Heart left ventricle (tissue), 16 donors: ENCODE measurements at regions of chr2 and their contacts with region 1.

Region 1: GRCh38 chr2:231124838-231125568 is at the start of gene HTR2B:
- DNase-seq: no peak
- ATAC-seq: peak in 3 of 4 donors; percentile 46 to 78 (median 49)
- H3K4me3 ChIP-seq: peak within 1 kb of the TSS in 8 of 12 donors; percentile 3 to 57 (median 28)
- H3K27ac ChIP-seq: peak within 1 kb of the TSS in 6 of 12 donors; percentile 2 to 53 (median 29)
- H3K4me1 ChIP-seq: peaks cover 2 to 32% (median 19%) of the 10 kb centered on the region in 12 donors
- H3K27me3 ChIP-seq: no peaks in the 10 kb centered on the region
- CTCF ChIP-seq: no peak
- POLR2A ChIP-seq: no peak
- total RNA-seq, gene HTR2B: 0.31 to 2.2 (median 0.72) TPM

Region 2: GRCh38 chr2:231181860-231182512 is 57.0 kb after region 1 on chr2:
- intact Hi-C with region 1: loop called in 1 of 10 experiments (anchors 2 kb)
- DNase-seq: peak; percentile 73 to 87 (median 86)
- ATAC-seq: peak; percentile 78 to 89 (median 86)
- H3K4me3 ChIP-seq: no peak overlapping the region
- H3K27ac ChIP-seq: peak overlapping the region; percentile 9 to 77 (median 54)
- H3K4me1 ChIP-seq: peaks cover 5 to 63% (median 36%) of the 10 kb centered on the region in 12 donors
- H3K27me3 ChIP-seq: no peaks in the 10 kb centered on the region
- CTCF ChIP-seq: peak in 1 of 12 donors; percentile 7
- POLR2A ChIP-seq: no peak

Region 3: DNA sequence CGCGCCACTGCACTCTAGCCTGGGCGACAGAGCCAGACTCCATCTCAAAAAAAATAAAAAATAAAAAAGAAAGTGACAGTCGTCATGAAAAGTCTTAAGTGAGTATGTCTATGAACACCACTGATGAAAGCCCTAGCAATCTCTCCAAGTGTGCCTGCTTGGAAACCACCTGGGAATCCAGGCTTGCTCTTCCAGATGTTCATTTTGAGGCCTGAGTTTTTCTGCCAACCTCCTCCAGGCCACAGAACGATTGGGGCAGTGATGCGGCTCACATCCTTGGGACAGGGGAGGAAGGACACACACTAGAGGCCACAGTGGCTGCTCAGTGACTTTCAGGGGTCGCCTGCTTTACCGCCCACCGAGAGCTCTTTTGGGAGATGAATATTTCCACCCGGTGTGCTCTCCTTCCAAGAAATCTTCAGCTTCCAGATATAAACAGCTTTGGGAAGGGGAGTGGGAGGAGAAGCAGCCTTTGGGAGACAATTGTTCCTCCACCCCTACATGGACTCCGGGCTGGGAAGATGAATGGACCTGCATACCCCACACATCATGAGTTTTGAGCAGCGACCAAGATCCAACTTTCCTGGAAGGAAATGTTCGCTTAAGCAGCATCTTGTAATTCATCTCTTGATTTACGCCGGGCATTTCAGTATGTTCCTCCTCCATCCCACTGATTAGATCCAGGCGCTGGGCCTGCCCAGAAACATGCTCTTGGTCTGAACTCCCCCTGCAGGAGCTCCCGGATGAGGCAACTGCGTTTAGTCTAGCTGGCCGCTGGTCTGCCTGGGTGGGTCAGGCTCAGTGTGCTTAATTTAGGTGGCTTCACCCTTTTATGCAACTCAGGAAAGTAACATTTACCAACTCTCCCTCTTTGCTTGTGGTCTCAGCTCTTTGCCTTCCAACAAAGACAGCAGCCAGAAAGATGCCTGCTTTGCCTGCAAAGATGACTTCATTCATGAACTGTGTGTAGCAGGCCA is 67.2 kb after region 1 on chr2:
- intact Hi-C with region 1: loop called in 1 of 10 experiments (anchors 5 kb)
- DNase-seq: peak; percentile 69 to 85 (median 79)
- ATAC-seq: peak; percentile 58 to 76 (median 67)
- H3K4me3 ChIP-seq: no peak overlapping the region
- H3K27ac ChIP-seq: peak overlapping the region in 11 of 12 donors; percentile 15 to 95 (median 85)
- H3K4me1 ChIP-seq: peaks cover 0 to 40% (median 20%) of the 10 kb centered on the region in 12 donors
- H3K27me3 ChIP-seq: peaks cover 0 to 6% (median 0%) of the 10 kb centered on the region in 9 donors
- CTCF ChIP-seq: peak; percentile 39 to 83 (median 58)
- POLR2A ChIP-seq: no peak